ENCODE measurements at regions of chr2 and their contacts with region 1.

Region 1: DNA sequence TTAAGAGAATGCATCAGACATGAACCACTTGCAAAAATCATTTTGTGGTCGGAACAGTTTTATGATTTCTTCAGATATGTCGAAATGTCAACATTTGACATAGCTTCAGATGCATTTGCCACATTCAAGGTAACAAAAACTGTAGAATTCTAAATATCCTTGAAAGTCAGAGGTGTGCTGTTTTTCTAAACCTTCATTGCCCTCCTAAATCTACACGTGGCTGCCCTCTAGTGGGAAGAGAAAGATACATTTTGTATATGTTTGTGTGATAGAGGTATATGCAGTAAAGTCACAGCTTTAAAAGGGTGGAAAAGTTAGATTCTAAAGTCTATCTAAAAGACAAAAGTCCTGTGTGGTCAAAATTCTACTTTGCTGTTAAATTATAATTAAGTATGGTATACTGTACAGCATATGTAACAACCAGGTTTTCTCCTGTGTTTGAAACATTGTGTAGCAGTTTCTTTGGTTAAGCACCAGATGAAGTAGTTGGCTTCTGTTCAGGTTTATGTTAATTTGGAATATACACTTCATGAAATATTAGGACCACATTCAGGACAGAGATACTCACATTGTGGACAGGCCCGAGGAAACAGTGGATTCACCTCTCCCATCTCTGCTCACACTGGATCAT is 65.9 kb upstream of the ITM2C start:
- DNase-seq: no peak
- ATAC-seq: peak; percentile 94
- H3K4me3 ChIP-seq: no peak overlapping the region
- H3K27ac ChIP-seq: no peak overlapping the region
- H3K4me1 ChIP-seq: peaks cover 14% of the 10 kb centered on the region
- H3K27me3 ChIP-seq: no peaks in the 10 kb centered on the region
- CTCF ChIP-seq: peak; percentile 57 to 71 (median 68)
- EP300 ChIP-seq: no peak
- POLR2A ChIP-seq: no peak
- RAD21 ChIP-seq: peak; percentile 96

Region 2: GRCh38 chr2:230602562-230603230 is 196.2 kb before region 1 on chr2:
- CTCF ChIA-PET with region 1: interaction called, 56 read pairs
- POLR2A ChIA-PET with region 1: interaction called, 3 read pairs
- RAD21 ChIA-PET with region 1: interaction called, 17 read pairs
- SMC1A ChIA-PET with region 1: interaction called, 13 read pairs
- in situ Hi-C with region 1: no loop called
- intact Hi-C with region 1: no loop called
- DNase-seq: no peak
- ATAC-seq: peak; percentile 70
- H3K4me3 ChIP-seq: peak overlapping the region; percentile 32; the same call in 1 of the 2 replicates
- H3K27ac ChIP-seq: peak overlapping the region; percentile 86
- H3K4me1 ChIP-seq: peaks cover 47% of the 10 kb centered on the region
- H3K27me3 ChIP-seq: no peaks in the 10 kb centered on the region
- CTCF ChIP-seq: no peak
- EP300 ChIP-seq: no peak
- POLR2A ChIP-seq: peak; percentile 74
- RAD21 ChIP-seq: peak; percentile 16; the same call in 1 of the 2 replicates

Region 3: DNA sequence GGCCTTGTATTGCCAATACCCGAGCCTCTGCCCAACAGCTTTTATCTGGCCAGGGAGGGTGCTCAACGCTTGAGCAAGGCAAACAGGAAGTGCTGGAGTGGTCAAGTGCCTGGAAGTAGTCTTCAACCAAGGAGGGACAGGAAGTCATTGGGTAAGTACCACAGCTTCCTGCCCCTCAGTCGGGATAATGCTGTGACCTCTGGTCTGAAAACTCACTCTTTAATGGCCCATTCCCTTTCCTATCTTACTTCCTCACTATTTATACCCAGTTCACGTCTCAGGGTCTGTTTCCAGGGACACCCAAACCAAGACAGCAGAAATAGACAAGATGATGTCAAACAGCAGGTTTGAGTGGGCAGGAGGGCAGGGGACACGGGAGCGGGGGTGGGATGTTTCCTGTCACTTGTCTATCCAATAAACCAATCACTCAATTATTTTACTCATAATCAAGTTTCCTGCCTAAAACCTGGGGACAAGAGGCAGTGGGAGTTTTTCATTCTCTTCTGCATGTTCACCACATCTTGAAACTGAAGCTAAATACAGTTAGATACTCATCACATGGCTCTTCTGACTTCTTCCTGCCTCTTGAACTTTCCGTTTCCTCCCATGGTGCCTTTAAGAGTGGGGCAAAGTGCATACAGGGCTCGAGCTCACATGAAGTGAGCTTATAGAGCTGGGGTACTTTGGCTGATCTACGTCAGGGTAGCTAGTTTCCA is 155.2 kb before region 1 on chr2:
- CTCF ChIA-PET with region 1: interaction called, 19 read pairs
- POLR2A ChIA-PET with region 1: interaction called, 4 read pairs
- RAD21 ChIA-PET with region 1: interaction called, 3 read pairs
- SMC1A ChIA-PET with region 1: interaction called, 8 read pairs
- in situ Hi-C with region 1: no loop called
- intact Hi-C with region 1: no loop called
- DNase-seq: no peak
- ATAC-seq: peak; percentile 88
- H3K4me3 ChIP-seq: no peak overlapping the region
- H3K27ac ChIP-seq: peak overlapping the region; percentile 60
- H3K4me1 ChIP-seq: peaks cover 18% of the 10 kb centered on the region
- H3K27me3 ChIP-seq: no peaks in the 10 kb centered on the region
- CTCF ChIP-seq: no peak
- EP300 ChIP-seq: peak in 1 of 2 experiments; percentile 26; a peak in 1 of 4 replicates
- POLR2A ChIP-seq: no peak
- RAD21 ChIP-seq: no peak

Region 4: GRCh38 chr2:230677201-230677956 is 121.5 kb before region 1 on chr2:
- CTCF ChIA-PET with region 1: interaction called, 10 read pairs
- POLR2A ChIA-PET with region 1: no interaction called
- RAD21 ChIA-PET with region 1: interaction called, 4 read pairs
- SMC1A ChIA-PET with region 1: interaction called, 23 read pairs
- in situ Hi-C with region 1: no loop called
- intact Hi-C with region 1: no loop called
- DNase-seq: no peak
- ATAC-seq: no peak
- H3K4me3 ChIP-seq: no peak overlapping the region
- H3K27ac ChIP-seq: no peak overlapping the region
- H3K4me1 ChIP-seq: no peaks in the 10 kb centered on the region
- H3K27me3 ChIP-seq: no peaks in the 10 kb centered on the region
- CTCF ChIP-seq: no peak
- EP300 ChIP-seq: no peak
- POLR2A ChIP-seq: no peak
- RAD21 ChIP-seq: no peak

Region 5: GRCh38 chr2:230738391-230738811 is 60.5 kb before region 1 on chr2:
- CTCF ChIA-PET with region 1: interaction called, 6 read pairs
- POLR2A ChIA-PET with region 1: interaction called, 3 read pairs
- RAD21 ChIA-PET with region 1: interaction called, 4 read pairs
- SMC1A ChIA-PET with region 1: interaction called, 14 read pairs
- in situ Hi-C with region 1: no loop called
- intact Hi-C with region 1: no loop called
- DNase-seq: no peak
- ATAC-seq: peak; percentile 14; the same call in 2 of the 3 replicates
- H3K4me3 ChIP-seq: peak overlapping the region; percentile 0; the same call in 1 of the 2 replicates
- H3K27ac ChIP-seq: peak overlapping the region; percentile 17; the same call in 1 of the 2 replicates
- H3K4me1 ChIP-seq: peaks cover 23% of the 10 kb centered on the region
- H3K27me3 ChIP-seq: no peaks in the 10 kb centered on the region
- CTCF ChIP-seq: no peak
- EP300 ChIP-seq: no peak
- POLR2A ChIP-seq: no peak
- RAD21 ChIP-seq: no peak

Region 6: DNA sequence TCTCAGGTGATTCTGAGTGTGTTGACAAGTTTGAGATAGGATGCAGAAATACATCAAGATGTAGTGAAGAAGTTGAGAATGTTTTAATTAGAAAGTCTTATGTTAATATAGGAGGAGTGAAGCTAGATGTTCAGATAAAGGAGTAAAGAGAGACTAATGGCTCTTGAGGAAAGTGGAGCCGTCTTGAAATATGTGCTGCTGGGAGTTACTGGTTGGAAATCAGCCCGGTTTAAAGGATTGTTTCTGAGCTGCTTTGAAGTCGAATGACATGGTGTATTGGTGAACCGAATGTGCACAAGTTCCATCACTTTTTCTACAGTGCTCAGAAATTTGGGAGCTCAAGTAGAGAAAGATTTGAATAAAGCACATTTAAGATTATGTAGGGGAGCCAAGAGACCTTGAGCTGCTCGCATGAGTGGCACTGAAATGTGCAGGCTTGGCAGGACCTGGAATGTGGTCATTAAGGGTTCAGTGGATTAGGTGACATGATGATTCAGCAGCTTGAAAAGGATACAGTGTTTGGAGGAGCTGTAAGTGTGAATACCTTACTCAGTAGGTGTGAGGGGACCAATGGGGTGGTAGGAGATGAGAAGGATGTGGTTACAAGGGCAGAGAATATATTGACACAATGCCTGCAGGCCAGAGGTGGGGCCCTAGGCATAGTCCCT is 17.6 kb before region 1 on chr2:
- CTCF ChIA-PET with region 1: interaction called, 21 read pairs
- POLR2A ChIA-PET with region 1: interaction called, 3 read pairs
- RAD21 ChIA-PET with region 1: interaction called, 14 read pairs
- SMC1A ChIA-PET with region 1: interaction called, 15 read pairs
- in situ Hi-C with region 1: no loop called
- intact Hi-C with region 1: loop called (anchors 2 kb)
- DNase-seq: no peak
- ATAC-seq: peak; percentile 62
- H3K4me3 ChIP-seq: no peak overlapping the region
- H3K27ac ChIP-seq: no peak overlapping the region
- H3K4me1 ChIP-seq: peaks cover 18% of the 10 kb centered on the region
- H3K27me3 ChIP-seq: no peaks in the 10 kb centered on the region
- CTCF ChIP-seq: no peak
- EP300 ChIP-seq: no peak
- POLR2A ChIP-seq: no peak
- RAD21 ChIP-seq: no peak

Region 7: GRCh38 chr2:230893841-230894781 is 95.2 kb after region 1 on chr2:
- CTCF ChIA-PET with region 1: no interaction called
- POLR2A ChIA-PET with region 1: no interaction called
- RAD21 ChIA-PET with region 1: no interaction called
- SMC1A ChIA-PET with region 1: no interaction called
- in situ Hi-C with region 1: no loop called
- intact Hi-C with region 1: no loop called
- DNase-seq: no peak
- ATAC-seq: peak; percentile 71
- H3K4me3 ChIP-seq: no peak overlapping the region
- H3K27ac ChIP-seq: 0 out of 2 replicates have a peak overlapping the region, but pooled peaks have one; percentile 7
- H3K4me1 ChIP-seq: peaks cover 39% of the 10 kb centered on the region
- H3K27me3 ChIP-seq: no peaks in the 10 kb centered on the region
- CTCF ChIP-seq: no peak
- EP300 ChIP-seq: no peak; a peak in 1 of 4 replicates
- POLR2A ChIP-seq: no peak
- RAD21 ChIP-seq: no peak

Measured in GM12878 (cell line).